Activated CD4-positive, alpha-beta memory T cell treated with anti-CD3 and anti-CD28 coated beads for 36 hours (primary cell): ENCODE measurements at regions of chr3 and their contacts with region 1.

Region 1: DNA sequence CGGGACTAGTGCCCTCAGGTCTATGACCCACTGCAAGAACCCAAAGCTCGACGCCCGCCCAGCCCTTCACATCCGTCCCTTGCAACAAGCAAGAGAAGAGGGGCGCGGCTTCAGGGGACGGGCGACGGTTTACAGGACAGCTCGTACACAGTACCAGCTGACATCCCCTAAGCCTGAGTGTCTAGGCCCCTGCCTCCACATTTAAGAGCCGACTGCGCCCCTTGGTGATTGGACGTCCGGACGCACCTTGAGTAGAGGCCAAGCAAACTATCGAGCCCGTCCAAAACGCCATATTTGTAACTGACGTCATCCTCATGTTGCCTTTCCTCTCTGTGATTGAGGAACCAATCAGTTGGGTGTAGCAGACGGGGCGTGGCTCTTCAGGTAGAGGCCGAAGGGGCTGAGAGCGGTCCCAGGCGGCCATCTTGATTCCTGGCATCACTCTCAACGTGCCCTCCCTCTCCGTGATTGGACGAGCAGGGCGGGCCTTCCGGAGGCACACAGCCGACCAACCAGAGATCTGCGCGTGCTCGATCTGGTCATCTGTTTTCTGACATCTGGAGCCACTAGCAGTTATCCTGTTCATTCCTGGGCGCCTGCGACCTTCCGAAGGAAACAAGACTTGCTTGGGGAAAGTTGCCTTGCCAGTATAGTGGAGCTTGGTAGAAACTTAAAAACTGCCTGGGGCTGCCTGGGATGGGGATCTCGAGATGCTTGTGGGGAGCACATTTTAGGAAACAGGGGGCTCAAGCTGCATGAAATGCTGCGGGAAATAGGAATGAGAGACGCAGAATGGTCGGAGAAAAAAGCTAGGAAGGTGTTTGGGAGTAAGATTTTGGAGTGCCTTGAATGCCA is 4.0 kb upstream of the RPL14 start:
- DNase-seq: peak; percentile 98
- H3K4me3 Mint-ChIP-seq: peak overlapping the region; percentile 93
- H3K27ac Mint-ChIP-seq: peak overlapping the region; percentile 96
- H3K4me1 Mint-ChIP-seq: peaks cover 32% of the 10 kb centered on the region
- H3K27me3 Mint-ChIP-seq: peaks cover 1% of the 10 kb centered on the region

Region 2: DNA sequence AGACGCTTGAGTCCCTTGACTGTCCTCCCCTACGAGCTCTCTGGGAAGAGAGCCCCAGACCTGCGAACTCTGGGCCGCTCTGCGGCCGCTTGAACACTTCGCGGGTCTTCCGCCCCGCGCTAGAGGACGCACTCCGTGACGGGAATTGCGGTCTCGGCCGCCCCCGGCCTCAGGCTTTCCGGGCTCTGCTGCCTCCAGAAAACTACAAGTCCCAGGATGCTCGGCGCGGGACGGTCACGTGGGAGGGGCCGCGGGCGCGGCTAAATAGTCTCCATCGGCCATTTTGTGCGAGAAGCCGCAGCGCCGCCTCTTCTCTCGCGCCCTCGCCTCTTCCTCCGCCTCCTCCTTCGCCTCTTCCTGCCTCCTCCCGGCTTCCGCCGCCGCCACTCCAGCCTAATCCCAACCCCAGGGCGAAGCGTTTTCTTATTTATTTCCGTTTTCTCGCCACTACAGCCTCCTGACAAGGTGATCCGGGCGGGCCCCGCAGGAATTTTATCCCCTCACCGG is 143.6 kb before region 1 on chr3 and contains the start of gene EIF1B:
- CTCF ChIA-PET with region 1: interaction called, 5 read pairs
- POLR2A ChIA-PET with region 1: interaction called, 3 read pairs
- intact Hi-C with region 1: loop called (anchors 1 kb)
- DNase-seq: peak; percentile 99
- H3K4me3 Mint-ChIP-seq: peak within 1 kb of the TSS; percentile 96
- H3K27ac Mint-ChIP-seq: peak within 1 kb of the TSS; percentile 97
- H3K4me1 Mint-ChIP-seq: peaks cover 23% of the 10 kb centered on the region
- H3K27me3 Mint-ChIP-seq: no peaks in the 10 kb centered on the region
- total RNA-seq, gene EIF1B: 48.6 to 51.0 TPM

Region 3: DNA sequence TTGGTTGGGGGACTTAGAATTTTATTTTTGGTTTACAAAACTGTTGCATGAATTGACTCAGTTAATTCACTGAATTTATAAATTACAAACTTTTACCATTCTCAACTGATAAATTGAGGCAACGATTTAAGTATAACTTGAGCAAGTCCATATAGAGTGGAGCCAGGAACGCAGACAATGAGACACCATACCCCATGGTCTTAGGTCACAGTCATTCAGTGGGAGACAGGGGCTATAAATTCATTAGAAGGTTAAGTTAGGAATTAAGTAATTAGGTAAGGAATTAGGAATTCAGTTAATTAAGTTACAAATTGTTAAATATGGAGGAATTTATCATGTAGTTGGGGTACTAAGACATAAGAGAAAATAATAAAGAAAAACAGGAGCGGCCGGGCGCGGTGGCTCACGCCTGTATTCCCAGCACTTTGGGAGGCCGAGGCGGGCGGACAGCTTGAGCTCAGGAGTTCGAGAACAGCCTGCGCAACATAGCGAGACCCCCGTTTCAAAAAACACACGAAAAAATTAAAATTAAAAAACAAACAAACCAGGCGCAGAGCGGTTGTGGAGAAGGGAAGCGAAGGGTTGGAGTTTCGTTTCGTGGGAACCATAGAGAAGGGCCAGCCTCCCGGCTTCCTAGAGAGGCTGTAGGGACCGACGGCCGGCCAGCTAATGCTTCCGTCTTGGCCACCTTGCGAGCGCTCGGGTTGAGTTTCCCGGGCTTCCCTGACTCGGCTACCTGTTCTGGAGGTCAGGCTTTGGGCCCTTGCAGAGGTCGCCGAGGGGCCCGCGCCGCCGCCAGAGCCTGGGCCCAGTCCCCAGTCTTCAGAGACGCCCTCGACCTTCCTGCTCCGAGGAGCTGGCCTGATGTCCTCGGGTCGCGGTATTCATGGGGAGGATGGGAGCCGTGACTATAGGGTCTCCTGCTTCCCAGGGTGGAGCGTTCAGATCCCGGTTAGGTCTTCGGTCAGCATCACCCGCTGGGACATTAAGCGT is 23.7 kb after region 1 on chr3 and contains the start of gene ZNF619:
- CTCF ChIA-PET with region 1: interaction called, 5 read pairs
- POLR2A ChIA-PET with region 1: interaction called, 4 read pairs
- intact Hi-C with region 1: loop called (anchors 1 kb)
- DNase-seq: peak; percentile 66
- H3K4me3 Mint-ChIP-seq: peak within 1 kb of the TSS; percentile 84
- H3K27ac Mint-ChIP-seq: peak within 1 kb of the TSS; percentile 67
- H3K4me1 Mint-ChIP-seq: peaks cover 12% of the 10 kb centered on the region
- H3K27me3 Mint-ChIP-seq: no peaks in the 10 kb centered on the region
- total RNA-seq, gene ZNF619: 7.4 to 8.3 TPM

Region 4: DNA sequence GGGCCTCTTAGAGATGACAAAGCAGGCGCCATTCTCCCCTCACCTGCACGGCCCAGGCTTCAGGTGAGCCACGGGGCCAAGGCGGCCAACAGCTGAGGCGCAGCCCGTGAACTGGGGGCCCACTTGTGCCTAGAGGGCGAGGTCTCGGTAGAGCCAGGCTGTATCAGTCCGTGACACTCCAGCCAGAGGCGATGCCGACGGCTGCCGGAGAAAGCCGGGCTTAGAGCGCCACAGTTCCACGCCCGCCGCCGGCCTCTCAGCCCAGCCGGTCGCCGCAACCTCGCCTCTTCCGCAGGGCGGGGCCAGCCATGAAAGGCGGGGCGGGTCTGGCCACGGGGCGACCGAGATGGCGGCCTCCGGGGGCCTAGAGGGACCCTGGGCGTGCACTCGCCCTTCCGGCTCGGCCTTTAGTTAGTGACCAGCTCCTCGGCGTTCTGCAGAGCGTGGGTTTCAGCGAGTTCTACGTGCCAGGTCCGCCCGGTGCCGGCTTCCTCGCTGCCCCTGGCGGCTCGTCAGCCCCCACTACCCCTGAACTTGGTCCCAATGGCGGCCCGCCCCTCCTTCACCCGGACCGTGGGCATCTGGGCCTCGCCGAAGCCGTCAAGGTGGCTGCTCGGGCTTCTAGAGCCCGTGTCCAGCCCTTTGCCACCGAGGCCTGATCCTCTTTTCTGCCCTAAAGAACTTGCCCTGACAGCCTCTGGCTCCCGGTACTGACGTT is 71.6 kb after region 1 on chr3 and contains the start of gene ZNF621:
- CTCF ChIA-PET with region 1: no interaction called
- POLR2A ChIA-PET with region 1: interaction called, 6 read pairs
- intact Hi-C with region 1: loop called (anchors 1 kb)
- DNase-seq: peak; percentile 88
- H3K4me3 Mint-ChIP-seq: peak within 1 kb of the TSS; percentile 91
- H3K27ac Mint-ChIP-seq: peak within 1 kb of the TSS; percentile 84
- H3K4me1 Mint-ChIP-seq: peaks cover 23% of the 10 kb centered on the region
- H3K27me3 Mint-ChIP-seq: no peaks in the 10 kb centered on the region
- total RNA-seq, gene ZNF621: 19.7 to 22.3 TPM

Region 5: DNA sequence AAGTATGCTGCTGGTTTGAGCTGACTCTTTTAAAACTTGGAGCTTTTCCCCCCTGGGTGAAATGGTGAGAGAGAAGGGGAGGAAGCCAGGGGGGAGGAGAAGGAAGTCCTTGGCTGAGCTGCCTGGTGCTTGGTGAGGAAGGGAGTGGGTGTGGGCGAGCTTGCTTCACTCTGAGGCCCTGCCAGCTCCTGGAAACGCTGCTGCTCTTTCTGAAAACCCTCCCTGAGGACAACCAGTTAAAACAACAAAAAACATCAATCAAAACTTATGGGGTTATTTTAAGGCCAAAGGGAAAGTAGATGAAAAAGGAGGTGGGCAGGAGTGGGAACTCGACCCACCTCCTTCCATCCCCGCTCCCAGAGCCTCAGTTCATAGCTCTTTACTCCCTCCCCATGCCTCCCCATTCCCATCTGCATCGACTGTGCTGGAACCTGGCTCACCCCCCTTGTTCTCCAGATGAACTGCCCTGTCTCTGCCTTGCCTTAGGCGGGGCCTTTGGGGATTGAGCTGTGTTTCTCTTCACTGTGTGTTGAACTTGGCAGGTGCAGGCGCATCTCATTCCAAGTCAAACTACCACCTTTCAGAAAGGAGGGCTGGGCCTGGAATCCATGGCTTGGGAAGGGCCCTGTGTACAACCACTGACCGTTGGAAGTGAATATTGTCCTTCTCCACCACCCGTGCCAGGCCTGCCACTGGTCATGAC is 237.8 kb after region 1 on chr3:
- CTCF ChIA-PET with region 1: no interaction called
- POLR2A ChIA-PET with region 1: no interaction called
- intact Hi-C with region 1: no loop called
- DNase-seq: no peak
- H3K4me3 Mint-ChIP-seq: no peak overlapping the region
- H3K27ac Mint-ChIP-seq: no peak overlapping the region
- H3K4me1 Mint-ChIP-seq: no peaks in the 10 kb centered on the region
- H3K27me3 Mint-ChIP-seq: peaks cover 34% of the 10 kb centered on the region

Region 6: GRCh38 chr3:41961750-41962679 is 1508.9 kb after region 1 on chr3 and contains the start of gene ULK4:
- CTCF ChIA-PET with region 1: no interaction called
- POLR2A ChIA-PET with region 1: no interaction called
- intact Hi-C with region 1: loop called (anchors 1 kb)
- DNase-seq: peak; percentile 98
- H3K4me3 Mint-ChIP-seq: peak within 1 kb of the TSS; percentile 90
- H3K27ac Mint-ChIP-seq: peak within 1 kb of the TSS; percentile 80
- H3K4me1 Mint-ChIP-seq: peaks cover 17% of the 10 kb centered on the region
- H3K27me3 Mint-ChIP-seq: peaks cover under 1% of the 10 kb centered on the region
- total RNA-seq, gene ULK4: 9.5 to 10.8 TPM